Posterior cingulate gyrus (tissue), 11 donors: ENCODE measurements at regions of chr16 and their contacts with region 1.

Region 1: DNA sequence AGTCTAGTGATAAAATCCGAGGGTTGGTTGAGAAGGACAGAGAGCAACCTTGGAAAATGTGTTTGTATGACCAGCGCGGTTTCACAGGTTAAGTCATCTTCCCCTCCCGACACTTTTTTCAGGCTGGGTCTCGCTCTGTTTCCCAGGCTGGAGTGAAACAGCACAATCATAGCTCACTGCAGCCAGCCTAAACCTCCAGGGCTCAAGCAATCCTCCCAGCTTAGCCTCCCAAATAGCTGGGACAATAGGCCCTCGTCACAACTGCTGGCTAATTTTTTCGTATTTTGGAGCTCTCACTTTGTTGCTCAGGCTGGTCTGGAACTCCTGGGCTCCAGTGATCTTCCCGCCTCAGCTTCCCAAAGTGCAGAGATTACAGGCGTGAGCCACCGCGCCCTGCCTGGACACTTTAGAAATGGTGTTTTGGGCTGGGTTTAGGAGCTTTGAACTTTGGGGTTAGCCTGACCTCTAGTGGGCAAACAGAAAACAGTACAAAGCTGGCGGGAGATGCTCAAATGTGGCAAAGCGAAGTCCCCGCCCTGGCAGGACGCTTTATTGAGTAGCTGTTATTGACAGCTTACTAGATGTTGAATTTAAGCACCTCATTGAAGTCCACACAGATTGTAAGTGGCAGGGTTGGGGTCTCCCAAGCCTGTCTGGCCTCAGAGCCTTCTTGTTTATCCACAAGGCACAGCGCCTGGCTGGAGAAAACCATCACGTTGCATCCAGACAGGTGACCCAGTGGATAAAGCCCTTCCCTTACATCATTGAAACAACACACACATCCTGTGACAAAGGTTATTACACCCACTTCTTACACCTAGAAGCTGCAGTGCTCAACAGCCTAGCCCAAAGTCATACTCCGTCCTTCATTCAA is 34.7 kb upstream of the RBBP6 start:
- DNase-seq: peak; percentile 18 to 92 (median 58)

Region 2: DNA sequence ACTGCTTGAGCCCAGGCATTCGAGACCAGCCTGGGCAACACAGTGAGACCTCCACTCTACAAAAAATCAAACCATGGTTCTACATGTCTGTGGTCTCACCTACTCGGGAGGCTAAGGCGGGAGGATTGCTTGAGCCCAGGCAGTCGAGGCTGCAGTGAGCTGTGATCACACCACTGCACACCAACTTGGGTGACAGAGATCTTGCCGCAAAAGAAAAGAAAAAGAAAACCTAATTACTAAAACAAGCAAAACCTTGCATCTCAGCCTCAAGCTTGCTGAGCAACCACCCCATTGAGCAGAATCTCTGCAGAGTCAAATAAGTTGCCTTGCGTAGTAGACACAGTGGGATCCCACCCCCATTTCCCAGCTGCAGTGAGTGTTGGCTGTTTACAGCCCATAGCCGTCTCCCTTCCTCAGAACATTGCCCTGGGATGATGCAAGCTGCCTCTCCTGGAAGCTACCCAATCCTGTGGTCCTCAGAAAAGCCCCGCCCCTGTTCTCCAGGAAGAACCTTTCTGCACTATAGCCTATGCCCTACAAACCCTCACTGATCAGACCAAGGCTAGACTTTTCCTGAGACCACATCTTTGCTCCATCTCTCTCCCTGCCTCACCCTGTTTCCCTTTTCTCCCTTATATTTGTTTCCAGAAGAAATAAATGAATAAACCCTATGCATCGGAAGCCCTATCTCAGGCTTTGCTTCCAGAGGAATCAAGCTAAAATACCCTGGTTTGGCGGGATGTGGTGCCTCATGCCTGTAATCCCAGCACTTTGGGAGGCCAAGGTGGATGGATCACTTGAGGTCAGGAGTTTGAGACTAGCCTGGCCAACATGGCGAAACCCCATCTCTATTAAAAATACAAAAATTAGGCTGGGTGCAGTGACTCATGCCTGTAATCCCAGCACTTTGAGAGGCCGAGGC is 774.9 kb before region 1 on chr16:
- intact Hi-C with region 1: loop called (anchors 10 kb)
- DNase-seq: no peak

Region 3: GRCh38 chr16:23803591-23804123 is 701.1 kb before region 1 on chr16:
- intact Hi-C with region 1: loop called (anchors 10 kb)
- DNase-seq: peak; percentile 37 to 95 (median 64)

Region 4: GRCh38 chr16:24041826-24042631 is 462.7 kb before region 1 on chr16:
- intact Hi-C with region 1: loop called (anchors 1 kb)
- DNase-seq: peak; percentile 53 to 95 (median 83)

Region 5: DNA sequence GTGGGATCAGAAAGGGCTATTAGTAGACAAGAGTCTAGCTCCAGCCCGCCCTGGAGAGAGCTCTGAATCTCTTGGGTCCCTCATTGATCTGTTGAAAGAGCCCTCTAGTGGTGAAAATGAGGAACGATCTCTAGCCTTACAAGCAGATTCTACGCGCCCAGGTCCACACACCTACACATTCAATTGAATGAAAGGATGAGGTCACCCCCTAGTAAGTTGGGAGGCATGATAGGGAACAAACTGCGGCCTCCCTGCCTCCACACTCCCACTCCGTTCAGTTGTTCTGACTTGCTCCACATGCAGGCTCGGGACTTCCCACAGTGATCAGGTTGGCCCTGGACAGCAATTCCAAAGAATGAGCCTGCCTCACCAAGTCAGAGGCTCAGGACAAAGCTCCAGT is 251.5 kb before region 1 on chr16:
- intact Hi-C with region 1: loop called (anchors 5 kb)
- DNase-seq: peak in 9 of 10 donors; percentile 26 to 85 (median 46)

Region 6: GRCh38 chr16:24442631-24443030 is 62.1 kb before region 1 on chr16:
- intact Hi-C with region 1: no loop called
- DNase-seq: no peak